ENCODE measurements at regions of chr1 and their contacts with region 1.

Region 1: GRCh38 chr1:206544562-206545257 is 37.4 kb downstream of the RASSF5 start:
- DNase-seq: no peak
- H3K4me3 ChIP-seq: no peak overlapping the region
- H3K27ac ChIP-seq: no peak overlapping the region
- H3K27me3 ChIP-seq: peaks cover 13% of the 10 kb centered on the region
- CTCF ChIP-seq: peak; percentile 88

Region 2: DNA sequence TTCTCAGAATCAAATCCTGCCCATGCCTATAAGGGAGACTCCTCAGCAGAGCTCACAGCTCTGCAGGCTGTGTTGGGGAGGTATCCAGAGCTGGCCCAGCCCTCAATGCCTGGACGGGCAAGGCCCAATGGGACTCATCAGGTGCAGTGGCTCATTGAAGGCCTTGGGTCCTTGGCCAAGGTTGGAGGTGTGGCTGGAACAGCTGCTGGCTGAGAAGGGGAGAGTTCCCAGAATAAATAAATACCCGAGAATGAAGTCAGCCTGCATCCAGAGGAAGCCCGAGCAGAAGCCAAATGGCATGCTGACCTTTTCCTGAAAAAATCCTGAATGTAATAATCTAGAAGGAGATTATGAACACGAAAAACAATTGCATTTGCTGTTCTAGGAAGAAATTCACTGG is 99.6 kb before region 1 on chr1:
- CTCF ChIA-PET with region 1: no interaction called
- POLR2A ChIA-PET with region 1: no interaction called
- DNase-seq: peak; percentile 27
- H3K4me3 ChIP-seq: no peak overlapping the region
- H3K27ac ChIP-seq: no peak overlapping the region
- H3K27me3 ChIP-seq: no peaks in the 10 kb centered on the region
- CTCF ChIP-seq: no peak

Region 3: DNA sequence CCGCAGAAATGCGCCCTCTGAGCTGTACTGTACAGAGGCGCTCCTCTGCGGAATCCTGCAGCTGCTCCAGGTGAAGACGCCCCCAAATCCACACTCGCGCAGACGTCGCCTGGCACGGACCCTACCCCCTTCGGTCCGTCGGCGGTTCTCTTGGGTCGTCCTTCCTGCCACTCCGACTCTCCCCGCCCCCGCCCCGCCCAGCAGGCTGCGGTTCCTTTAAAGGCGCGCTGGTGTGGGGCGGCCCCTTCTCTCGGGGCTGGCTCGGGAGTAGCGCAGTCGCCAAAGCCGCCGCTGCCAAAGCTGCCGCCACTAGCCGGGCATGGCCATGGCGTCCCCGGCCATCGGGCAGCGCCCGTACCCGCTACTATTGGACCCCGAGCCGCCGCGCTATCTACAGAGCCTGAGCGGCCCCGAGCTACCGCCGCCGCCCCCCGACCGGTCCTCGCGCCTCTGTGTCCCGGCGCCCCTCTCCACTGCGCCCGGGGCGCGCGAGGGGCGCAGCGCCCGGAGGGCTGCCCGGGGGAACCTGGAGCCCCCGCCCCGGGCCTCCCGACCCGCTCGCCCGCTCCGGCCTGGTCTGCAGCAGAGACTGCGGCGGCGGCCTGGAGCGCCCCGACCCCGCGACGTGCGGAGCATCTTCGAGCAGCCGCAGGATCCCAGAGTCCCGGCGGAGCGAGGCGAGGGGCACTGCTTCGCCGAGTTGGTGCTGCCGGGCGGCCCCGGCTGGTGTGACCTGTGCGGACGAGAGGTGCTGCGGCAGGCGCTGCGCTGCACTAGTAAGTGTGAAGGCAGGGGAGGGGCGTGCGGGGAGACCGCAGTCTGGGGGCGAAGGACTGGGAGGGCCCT is 37.2 kb before region 1 on chr1 and contains the start of gene RASSF5:
- CTCF ChIA-PET with region 1: interaction called, 16 read pairs
- POLR2A ChIA-PET with region 1: no interaction called
- DNase-seq: no peak
- H3K4me3 ChIP-seq: peak within 1 kb of the TSS; percentile 60
- H3K27ac ChIP-seq: no peak within 1 kb of the TSS
- H3K27me3 ChIP-seq: peaks cover 8% of the 10 kb centered on the region
- CTCF ChIP-seq: no peak
- polyA plus RNA-seq, gene RASSF5: 2.3 and 2.4 TPM in 2 replicates

Region 4: DNA sequence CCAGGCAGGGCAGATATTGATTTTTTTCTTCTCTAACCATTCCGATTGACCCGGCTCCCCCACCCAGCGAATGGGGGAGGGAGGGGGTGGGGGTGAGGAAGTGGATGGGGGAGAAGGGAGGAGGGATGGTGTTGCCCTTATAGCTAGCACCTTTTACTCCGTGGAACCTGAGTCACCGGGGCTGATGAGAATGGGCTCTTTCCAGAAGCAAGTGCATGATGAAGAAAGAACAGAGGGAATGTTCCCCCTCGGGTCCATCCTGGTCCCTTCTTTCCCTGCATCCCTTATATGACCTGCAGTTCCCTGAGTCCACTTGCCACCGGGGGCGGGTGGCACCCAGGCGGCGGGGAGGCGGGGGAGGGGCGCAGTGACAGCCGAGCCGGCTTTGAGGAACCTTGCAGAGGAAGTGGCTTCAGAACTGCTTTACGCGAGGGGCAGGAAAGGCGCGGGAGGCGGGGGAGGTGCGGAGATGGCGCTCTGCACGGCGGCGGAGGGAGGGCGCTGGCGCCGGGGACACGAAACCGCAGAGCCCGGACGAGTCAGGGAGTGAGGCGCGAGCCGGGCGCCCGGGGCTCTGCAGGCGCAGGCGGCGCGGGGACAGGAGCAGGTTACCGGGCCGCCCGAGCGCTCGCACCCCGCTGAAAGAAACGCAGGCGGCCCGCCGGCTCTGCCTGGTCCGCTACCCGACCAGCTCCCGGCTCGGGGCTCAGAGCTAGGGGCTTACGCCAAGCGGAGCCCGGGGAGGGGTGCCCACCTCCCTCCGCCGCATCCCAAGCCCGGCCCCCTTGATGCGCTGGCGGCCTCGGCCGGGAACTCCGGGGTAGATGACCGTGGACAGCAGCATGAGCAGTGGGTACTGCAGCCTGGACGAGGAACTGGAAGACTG is 12.3 kb after region 1 on chr1:
- CTCF ChIA-PET with region 1: interaction called, 79 read pairs
- POLR2A ChIA-PET with region 1: no interaction called
- DNase-seq: no peak
- H3K4me3 ChIP-seq: peak overlapping the region; percentile 54
- H3K27ac ChIP-seq: no peak overlapping the region
- H3K27me3 ChIP-seq: peaks cover 13% of the 10 kb centered on the region
- CTCF ChIP-seq: no peak

Region 5: GRCh38 chr1:206575165-206575893 is 30.6 kb after region 1 on chr1:
- CTCF ChIA-PET with region 1: interaction called, 27 read pairs
- POLR2A ChIA-PET with region 1: no interaction called
- DNase-seq: peak; percentile 73
- H3K4me3 ChIP-seq: no peak overlapping the region
- H3K27ac ChIP-seq: peak overlapping the region; percentile 39
- H3K27me3 ChIP-seq: peaks cover 3% of the 10 kb centered on the region
- CTCF ChIP-seq: no peak

Region 6: DNA sequence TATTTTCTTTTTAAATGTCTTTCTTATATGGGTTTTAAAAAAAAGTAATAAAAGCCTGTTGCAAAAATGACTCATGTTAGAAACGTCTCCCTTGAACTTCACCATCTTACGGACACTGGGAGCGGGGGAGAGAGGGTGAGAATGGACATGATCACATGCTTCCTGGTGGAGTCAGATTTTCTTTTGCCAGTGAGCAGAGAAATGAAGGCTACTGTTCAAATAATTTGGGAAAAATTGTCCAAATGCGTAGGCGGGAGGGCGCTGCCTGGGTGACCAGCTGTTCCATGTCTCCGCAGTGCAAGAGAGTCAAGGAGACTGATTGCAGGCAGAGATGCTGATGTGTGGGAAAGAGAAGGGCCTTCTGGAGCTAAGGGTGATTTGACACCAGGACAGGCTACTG is 44.5 kb after region 1 on chr1:
- CTCF ChIA-PET with region 1: interaction called, 79 read pairs
- POLR2A ChIA-PET with region 1: no interaction called
- DNase-seq: peak; percentile 92
- H3K4me3 ChIP-seq: no peak overlapping the region
- H3K27ac ChIP-seq: peak overlapping the region; percentile 77
- H3K27me3 ChIP-seq: no peaks in the 10 kb centered on the region
- CTCF ChIP-seq: no peak

Region 7: GRCh38 chr1:206684478-206685333 is 140.0 kb after region 1 on chr1 and contains the start of gene MAPKAPK2:
- CTCF ChIA-PET with region 1: no interaction called
- POLR2A ChIA-PET with region 1: no interaction called
- DNase-seq: no peak
- H3K4me3 ChIP-seq: peak within 1 kb of the TSS; percentile 81
- H3K27ac ChIP-seq: peak within 1 kb of the TSS; percentile 91
- H3K27me3 ChIP-seq: no peaks in the 10 kb centered on the region
- CTCF ChIP-seq: no peak
- polyA plus RNA-seq, gene MAPKAPK2: 64.9 and 76.2 TPM in 2 replicates